ENCODE measurements at regions of chr4 and their contacts with region 1.

Region 1: DNA sequence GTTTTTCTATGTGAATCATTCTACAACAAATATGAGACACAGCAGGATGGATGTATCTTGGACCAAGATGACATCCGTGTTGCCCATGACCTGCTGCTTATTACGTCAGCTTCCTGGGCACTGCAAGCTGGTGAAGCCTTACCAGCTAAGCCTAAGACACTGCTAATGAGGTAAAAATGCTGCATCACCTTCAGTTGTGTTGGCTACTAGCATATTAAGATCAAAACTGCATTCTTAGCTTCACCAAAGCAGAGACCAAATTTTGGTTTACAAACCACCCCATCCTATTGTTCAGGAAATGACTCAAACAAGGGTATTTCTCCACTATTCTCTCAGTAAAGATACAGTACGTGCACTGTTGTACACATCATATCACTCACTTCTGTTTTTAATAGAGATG is 50.3 kb downstream of the MAML3 start:
- DNase-seq: no peak
- H3K4me3 ChIP-seq: no peak overlapping the region
- H3K27ac ChIP-seq: no peak overlapping the region
- H3K4me1 ChIP-seq: peaks cover 0 to 11% of the 10 kb centered on the region in 2 donors
- H3K27me3 ChIP-seq: no peaks in the 10 kb centered on the region
- CTCF ChIP-seq: no peak
- POLR2A ChIP-seq: no peak

Region 2: DNA sequence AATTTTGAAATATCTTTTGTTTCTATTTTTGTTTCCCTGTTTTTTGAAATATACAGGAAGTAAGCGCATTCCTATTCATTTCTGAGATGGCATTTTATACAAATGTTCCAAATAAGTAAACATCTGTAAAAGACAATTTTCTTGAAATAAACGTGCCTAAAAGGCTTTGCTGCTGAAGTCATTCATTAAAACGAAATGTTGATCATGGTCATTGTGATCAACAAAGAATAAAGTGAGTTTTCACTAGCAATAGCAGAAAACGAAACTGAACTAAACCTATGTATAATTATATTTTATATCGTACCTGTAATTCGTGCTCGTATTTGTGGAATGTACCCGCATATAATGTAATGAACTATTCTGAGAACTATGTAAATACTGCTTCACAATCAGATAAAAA is 216.9 kb before region 1 on chr4:
- intact Hi-C with region 1: no loop called
- DNase-seq: no peak
- H3K4me3 ChIP-seq: no peak overlapping the region
- H3K27ac ChIP-seq: peak overlapping the region; percentile 34 to 79 (median 50)
- H3K4me1 ChIP-seq: peaks cover 23 to 42% of the 10 kb centered on the region in 2 donors
- H3K27me3 ChIP-seq: no peaks in the 10 kb centered on the region
- CTCF ChIP-seq: no peak
- POLR2A ChIP-seq: no peak

Region 3: DNA sequence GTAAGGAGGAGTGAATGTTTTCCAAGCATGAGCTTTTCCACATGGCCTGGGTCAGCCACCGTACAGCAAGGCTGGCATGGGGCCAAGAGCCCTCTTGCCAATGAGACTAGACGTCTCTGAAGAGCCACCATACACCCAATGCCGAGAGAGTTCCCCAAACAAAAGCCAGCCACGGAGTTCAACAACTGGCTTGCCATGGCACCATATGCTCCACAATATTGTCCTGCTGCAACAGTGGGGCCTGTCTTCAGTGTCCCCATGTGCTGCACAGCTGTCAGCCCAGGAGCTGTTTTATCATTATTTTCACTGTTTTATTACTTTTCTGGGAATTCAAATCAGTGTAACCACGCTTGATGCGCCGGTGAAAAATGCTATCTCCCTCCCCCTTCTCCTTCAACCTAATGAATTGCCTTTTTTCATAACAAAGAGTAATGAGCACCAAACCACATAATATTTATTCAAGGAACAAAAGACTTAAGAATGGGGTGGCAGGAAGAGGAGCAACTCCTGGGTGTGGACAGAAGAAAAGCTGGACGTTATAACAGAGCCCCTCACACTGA is 31.9 kb after region 1 on chr4:
- intact Hi-C with region 1: loop called (anchors 5 kb)
- DNase-seq: peak; percentile 83
- H3K4me3 ChIP-seq: no peak overlapping the region
- H3K27ac ChIP-seq: no peak overlapping the region
- H3K4me1 ChIP-seq: peaks cover 10 to 20% of the 10 kb centered on the region in 2 donors
- H3K27me3 ChIP-seq: no peaks in the 10 kb centered on the region
- CTCF ChIP-seq: no peak
- POLR2A ChIP-seq: no peak

Measured in thyroid gland (tissue), 4 donors.